Naive thymus-derived CD4-positive, alpha-beta T cell (primary cell): ENCODE measurements at regions of chr12 and their contacts with region 1.

Region 1: GRCh38 chr12:52615208-52615868 is 3.0 kb downstream of the KRT73 start:
- DNase-seq: peak in 6 of 9 donors; percentile 37 to 72 (median 64)
- ATAC-seq: peak; percentile 36
- H3K4me3 ChIP-seq: peak overlapping the region; percentile 5
- H3K4me3 Mint-ChIP-seq: peak overlapping the region; percentile 31 to 85 (median 64)
- H3K27ac ChIP-seq: peak overlapping the region; percentile 84
- H3K27ac Mint-ChIP-seq: peak overlapping the region; percentile 69 to 99 (median 97)
- H3K4me1 ChIP-seq: peaks cover 6 to 82% of the 10 kb centered on the region in 2 donors
- H3K4me1 Mint-ChIP-seq: peaks cover 54 to 97% (median 94%) of the 10 kb centered on the region in 7 donors
- H3K27me3 ChIP-seq: no peaks in the 10 kb centered on the region
- H3K27me3 Mint-ChIP-seq: peaks cover 0 to 8% (median 0%) of the 10 kb centered on the region in 5 donors

Region 2: GRCh38 chr12:51932218-51933076 is 682.9 kb before region 1 on chr12:
- CTCF ChIA-PET with region 1: no interaction called
- POLR2A ChIA-PET with region 1: no interaction called
- intact Hi-C with region 1: no loop called
- DNase-seq: no peak
- ATAC-seq: no peak
- H3K4me3 ChIP-seq: no peak overlapping the region
- H3K4me3 Mint-ChIP-seq: no peak overlapping the region
- H3K27ac ChIP-seq: no peak overlapping the region
- H3K27ac Mint-ChIP-seq: no peak overlapping the region
- H3K4me1 ChIP-seq: no peaks in the 10 kb centered on the region
- H3K4me1 Mint-ChIP-seq: peaks cover 0 to 6% (median 0%) of the 10 kb centered on the region in 7 donors
- H3K27me3 ChIP-seq: no peaks in the 10 kb centered on the region
- H3K27me3 Mint-ChIP-seq: peaks cover 0 to 16% (median 0%) of the 10 kb centered on the region in 5 donors

Region 3: DNA sequence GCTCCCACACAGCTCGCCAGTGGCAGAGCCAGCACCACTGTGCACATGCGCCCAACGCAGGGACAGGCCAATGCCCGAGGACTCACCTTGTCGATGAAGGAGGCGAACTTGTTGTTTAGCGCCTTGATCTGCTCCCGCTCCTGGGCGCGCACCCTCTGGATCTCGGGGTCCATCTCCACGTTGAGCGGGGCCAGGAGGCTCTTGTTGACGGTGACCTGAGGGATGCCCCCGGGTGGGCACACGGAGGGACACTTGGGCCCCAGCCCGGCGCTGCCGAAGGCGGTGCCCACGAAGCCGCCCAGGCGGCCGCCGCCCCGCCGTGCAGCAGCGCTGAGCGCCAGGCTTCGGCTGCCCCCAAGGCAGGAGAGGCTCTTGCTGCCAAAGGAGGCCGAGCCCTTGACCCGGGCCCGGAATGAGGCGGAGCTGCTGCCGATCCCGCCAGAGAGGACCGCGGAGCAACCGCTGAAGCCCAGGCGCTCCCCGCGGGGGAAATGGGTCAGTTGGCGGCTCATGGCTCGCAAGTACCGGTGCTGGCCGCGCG is 14.3 kb before region 1 on chr12 and contains the start of gene KRT72:
- CTCF ChIA-PET with region 1: interaction called, 7 read pairs
- POLR2A ChIA-PET with region 1: interaction called, 27 read pairs
- intact Hi-C with region 1: no loop called
- DNase-seq: peak in 1 of 9 donors; percentile 12
- ATAC-seq: no peak
- H3K4me3 ChIP-seq: no peak within 1 kb of the TSS
- H3K4me3 Mint-ChIP-seq: peak within 1 kb of the TSS in 6 of 10 donors; percentile 29 to 71 (median 64)
- H3K27ac ChIP-seq: no peak within 1 kb of the TSS
- H3K27ac Mint-ChIP-seq: peak within 1 kb of the TSS in 8 of 9 donors; percentile 37 to 97 (median 93)
- H3K4me1 ChIP-seq: peaks cover 0 to 40% of the 10 kb centered on the region in 2 donors
- H3K4me1 Mint-ChIP-seq: peaks cover 18 to 72% (median 61%) of the 10 kb centered on the region in 7 donors
- H3K27me3 ChIP-seq: no peaks in the 10 kb centered on the region
- H3K27me3 Mint-ChIP-seq: peaks cover 0 to 32% (median 0%) of the 10 kb centered on the region in 5 donors
- total RNA-seq, gene KRT72: 2.1 to 149 (median 104) TPM

Region 4: DNA sequence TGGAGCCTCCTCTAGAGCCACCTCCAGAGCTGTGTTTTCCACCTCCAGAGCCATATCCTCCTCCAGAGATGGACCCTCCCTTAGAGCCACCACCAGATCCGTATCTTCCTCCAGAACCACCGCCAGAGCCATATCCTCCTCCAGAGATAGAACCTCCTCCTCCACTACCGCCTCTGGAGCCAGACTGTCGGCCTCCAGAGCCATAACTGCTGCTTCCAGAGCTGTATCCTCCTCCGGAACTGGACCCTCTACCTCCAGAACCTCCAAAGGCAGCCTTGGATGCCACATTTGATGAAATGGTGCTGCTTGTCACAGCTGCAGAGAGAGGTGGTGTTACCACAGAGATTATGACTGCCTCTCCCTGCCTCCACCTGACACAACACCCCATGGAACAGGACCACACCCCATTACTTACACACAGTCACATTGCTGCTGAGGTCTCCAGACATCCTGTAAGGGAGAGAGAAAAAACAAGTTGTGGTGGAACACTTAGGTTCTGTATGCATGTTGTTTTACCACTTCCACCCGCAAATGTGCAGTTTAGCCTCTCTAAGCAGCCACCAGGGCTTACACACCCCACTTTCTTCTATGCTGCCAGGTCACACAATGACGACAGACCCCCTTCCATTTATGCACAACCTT is 29.9 kb after region 1 on chr12:
- CTCF ChIA-PET with region 1: interaction called, 28 read pairs
- POLR2A ChIA-PET with region 1: interaction called, 223 read pairs
- intact Hi-C with region 1: loop called (anchors 1 kb)
- DNase-seq: peak in 7 of 9 donors; percentile 81 to 98 (median 94)
- ATAC-seq: peak; percentile 96
- H3K4me3 ChIP-seq: no peak overlapping the region
- H3K4me3 Mint-ChIP-seq: peak overlapping the region; percentile 72 to 88 (median 83)
- H3K27ac ChIP-seq: peak overlapping the region; percentile 92
- H3K27ac Mint-ChIP-seq: peak overlapping the region; percentile 97 to 100 (median 100)
- H3K4me1 ChIP-seq: peaks cover 28 to 81% of the 10 kb centered on the region in 2 donors
- H3K4me1 Mint-ChIP-seq: peaks cover 68 to 99% (median 94%) of the 10 kb centered on the region in 7 donors
- H3K27me3 ChIP-seq: no peaks in the 10 kb centered on the region
- H3K27me3 Mint-ChIP-seq: peaks cover 0 to 17% (median 0%) of the 10 kb centered on the region in 5 donors

Region 5: DNA sequence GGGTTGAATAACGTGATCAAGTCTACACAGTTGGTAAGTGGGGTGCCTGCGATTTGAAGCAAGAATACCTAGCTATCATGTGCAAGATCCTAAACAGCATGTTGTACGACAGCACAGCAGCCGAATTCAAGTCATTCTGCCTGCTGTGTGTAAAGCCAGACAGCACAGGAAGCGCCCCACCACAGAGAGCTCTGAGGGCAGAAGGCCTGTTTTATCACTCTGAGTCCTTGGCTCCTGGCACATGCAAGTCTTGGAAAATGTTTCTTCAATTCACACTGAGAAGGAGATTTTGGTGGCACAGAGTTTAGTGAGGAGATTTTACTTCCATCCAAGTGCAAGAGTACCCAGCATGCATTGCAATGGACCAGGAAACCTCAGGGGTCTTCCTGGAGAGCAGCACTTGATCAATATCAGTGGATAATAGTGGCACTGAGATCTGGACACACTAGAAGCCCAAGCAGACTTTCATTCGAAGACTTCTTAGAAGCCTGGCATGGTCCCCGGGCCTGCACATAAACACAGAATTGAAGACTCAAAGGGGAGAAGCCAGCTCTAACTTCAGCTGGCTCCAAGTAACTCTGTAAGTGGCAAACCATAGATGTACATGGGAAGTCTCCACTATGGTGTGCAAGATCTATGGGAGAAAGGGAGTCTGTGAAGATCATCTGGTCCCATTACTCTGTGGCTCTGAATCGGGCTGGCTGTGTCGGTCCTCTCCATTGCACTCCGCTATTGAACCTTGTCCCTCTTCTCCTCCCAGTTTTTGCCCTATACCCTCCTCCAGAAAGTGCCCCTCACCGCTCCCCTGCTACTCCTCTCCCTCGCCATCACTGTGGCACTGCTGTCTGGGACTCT is 66.4 kb after region 1 on chr12:
- CTCF ChIA-PET with region 1: interaction called, 3 read pairs
- POLR2A ChIA-PET with region 1: interaction called, 11 read pairs
- intact Hi-C with region 1: loop called in 1 of 2 experiments (anchors 2 kb)
- DNase-seq: peak in 7 of 9 donors; percentile 60 to 74 (median 67)
- ATAC-seq: peak; percentile 90
- H3K4me3 ChIP-seq: no peak overlapping the region
- H3K4me3 Mint-ChIP-seq: peak overlapping the region in 9 of 10 donors; percentile 2 to 76 (median 48)
- H3K27ac ChIP-seq: peak overlapping the region; percentile 42
- H3K27ac Mint-ChIP-seq: peak overlapping the region in 8 of 9 donors; percentile 78 to 93 (median 86)
- H3K4me1 ChIP-seq: peaks cover 6 to 24% of the 10 kb centered on the region in 2 donors
- H3K4me1 Mint-ChIP-seq: peaks cover 16 to 76% (median 66%) of the 10 kb centered on the region in 7 donors
- H3K27me3 ChIP-seq: peaks cover 0 to 4% of the 10 kb centered on the region in 2 donors
- H3K27me3 Mint-ChIP-seq: peaks cover 0 to 35% (median 0%) of the 10 kb centered on the region in 5 donors

Region 6: GRCh38 chr12:52708010-52708409 is 92.7 kb after region 1 on chr12:
- CTCF ChIA-PET with region 1: interaction called, 11 read pairs
- POLR2A ChIA-PET with region 1: interaction called, 3 read pairs
- intact Hi-C with region 1: loop called in 1 of 2 experiments (anchors 1 kb)
- DNase-seq: peak in 7 of 9 donors; percentile 26 to 66 (median 52)
- ATAC-seq: peak; percentile 49
- H3K4me3 ChIP-seq: no peak overlapping the region
- H3K4me3 Mint-ChIP-seq: peak overlapping the region in 5 of 10 donors; percentile 11 to 63 (median 50)
- H3K27ac ChIP-seq: no peak overlapping the region
- H3K27ac Mint-ChIP-seq: peak overlapping the region in 8 of 9 donors; percentile 75 to 91 (median 83)
- H3K4me1 ChIP-seq: peaks cover 0 to 23% of the 10 kb centered on the region in 2 donors
- H3K4me1 Mint-ChIP-seq: peaks cover 4 to 62% (median 40%) of the 10 kb centered on the region in 7 donors
- H3K27me3 ChIP-seq: no peaks in the 10 kb centered on the region
- H3K27me3 Mint-ChIP-seq: peaks cover 0 to 29% (median 0%) of the 10 kb centered on the region in 5 donors

Region 7: GRCh38 chr12:52813885-52814711 is 198.8 kb after region 1 on chr12 and contains the start of gene KRT4:
- CTCF ChIA-PET with region 1: no interaction called
- POLR2A ChIA-PET with region 1: no interaction called
- intact Hi-C with region 1: no loop called
- DNase-seq: no peak
- ATAC-seq: no peak
- H3K4me3 ChIP-seq: no peak within 1 kb of the TSS
- H3K4me3 Mint-ChIP-seq: no peak within 1 kb of the TSS
- H3K27ac ChIP-seq: no peak within 1 kb of the TSS
- H3K27ac Mint-ChIP-seq: peak within 1 kb of the TSS in 4 of 9 donors; percentile 25 to 71 (median 52)
- H3K4me1 ChIP-seq: peaks cover 0 to 14% of the 10 kb centered on the region in 2 donors
- H3K4me1 Mint-ChIP-seq: peaks cover 5 to 17% (median 15%) of the 10 kb centered on the region in 7 donors
- H3K27me3 ChIP-seq: no peaks in the 10 kb centered on the region
- H3K27me3 Mint-ChIP-seq: peaks cover 0 to 3% (median 0%) of the 10 kb centered on the region in 5 donors
- total RNA-seq, gene KRT4: not detected

Region 8: GRCh38 chr12:52879394-52880351 is 264.3 kb after region 1 on chr12:
- CTCF ChIA-PET with region 1: interaction called, 22 read pairs
- POLR2A ChIA-PET with region 1: interaction called, 8 read pairs
- intact Hi-C with region 1: no loop called
- DNase-seq: peak; percentile 67 to 84 (median 79)
- ATAC-seq: peak; percentile 99
- H3K4me3 ChIP-seq: peak overlapping the region; percentile 48
- H3K4me3 Mint-ChIP-seq: peak overlapping the region; percentile 51 to 85 (median 76)
- H3K27ac ChIP-seq: no peak overlapping the region
- H3K27ac Mint-ChIP-seq: peak overlapping the region in 6 of 9 donors; percentile 5 to 54 (median 32)
- H3K4me1 ChIP-seq: peaks cover 5 to 6% of the 10 kb centered on the region in 2 donors
- H3K4me1 Mint-ChIP-seq: peaks cover 3 to 13% (median 11%) of the 10 kb centered on the region in 7 donors
- H3K27me3 ChIP-seq: peaks cover 0 to 3% of the 10 kb centered on the region in 2 donors
- H3K27me3 Mint-ChIP-seq: peaks cover 0 to 21% (median 8%) of the 10 kb centered on the region in 5 donors

Region 9: GRCh38 chr12:52903285-52903854 is 288.0 kb after region 1 on chr12:
- CTCF ChIA-PET with region 1: no interaction called
- POLR2A ChIA-PET with region 1: no interaction called
- intact Hi-C with region 1: no loop called
- DNase-seq: peak; percentile 25 to 72 (median 60)
- ATAC-seq: peak; percentile 86
- H3K4me3 ChIP-seq: peak overlapping the region; percentile 56
- H3K4me3 Mint-ChIP-seq: peak overlapping the region in 9 of 10 donors; percentile 36 to 85 (median 68)
- H3K27ac ChIP-seq: peak overlapping the region; percentile 39
- H3K27ac Mint-ChIP-seq: peak overlapping the region in 6 of 9 donors; percentile 11 to 49 (median 36)
- H3K4me1 ChIP-seq: peaks cover 0 to 3% of the 10 kb centered on the region in 2 donors
- H3K4me1 Mint-ChIP-seq: peaks cover 3 to 16% (median 5%) of the 10 kb centered on the region in 7 donors
- H3K27me3 ChIP-seq: no peaks in the 10 kb centered on the region
- H3K27me3 Mint-ChIP-seq: peaks cover 0 to 13% (median 0%) of the 10 kb centered on the region in 5 donors

Region 10: DNA sequence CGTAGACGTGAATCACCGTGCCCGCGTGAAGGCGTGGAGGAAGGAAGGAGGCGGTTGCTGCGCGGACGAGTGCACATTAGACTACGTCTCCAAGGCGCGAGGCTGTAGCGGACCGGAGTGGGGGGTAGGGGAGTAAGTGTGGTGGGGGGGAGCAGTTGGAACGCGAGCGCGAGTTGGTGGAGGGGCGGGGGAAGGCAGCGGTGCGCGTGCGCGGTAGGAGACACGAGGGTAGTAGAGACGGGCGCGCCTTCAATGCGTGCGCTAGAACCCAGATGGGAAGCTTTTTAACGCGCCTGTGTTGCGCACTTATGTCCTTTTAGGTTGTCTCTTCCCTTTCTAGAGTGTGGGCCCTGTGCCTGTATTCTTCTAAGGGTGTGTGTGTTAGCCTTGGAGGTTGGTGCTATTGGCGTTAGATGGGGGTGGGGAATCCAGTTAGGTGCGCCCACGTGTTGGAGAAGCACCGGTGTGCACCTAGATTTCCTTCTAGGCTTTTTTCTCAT is 391.5 kb after region 1 on chr12:
- CTCF ChIA-PET with region 1: no interaction called
- POLR2A ChIA-PET with region 1: no interaction called
- intact Hi-C with region 1: no loop called
- DNase-seq: peak; percentile 53 to 81 (median 73)
- ATAC-seq: peak; percentile 19
- H3K4me3 ChIP-seq: peak overlapping the region; percentile 99
- H3K4me3 Mint-ChIP-seq: peak overlapping the region; percentile 96 to 100 (median 99)
- H3K27ac ChIP-seq: peak overlapping the region; percentile 86
- H3K27ac Mint-ChIP-seq: peak overlapping the region; percentile 96 to 99 (median 98)
- H3K4me1 ChIP-seq: peaks cover 35 to 39% of the 10 kb centered on the region in 2 donors
- H3K4me1 Mint-ChIP-seq: peaks cover 33 to 65% (median 53%) of the 10 kb centered on the region in 7 donors
- H3K27me3 ChIP-seq: no peaks in the 10 kb centered on the region
- H3K27me3 Mint-ChIP-seq: peaks cover 0 to 5% (median 0%) of the 10 kb centered on the region in 5 donors